Dendritic cell treated with granulocyte-macrophage colony-stimulating factor and Interleukin-4, amounts not matched to agents 40 ng/mL and 50 ng/mL, for 4 days (primary cell): ENCODE measurements at regions of chr11 and their contacts with region 1.

Region 1: GRCh38 chr11:43894546-43894945 is 13.9 kb downstream of the ALKBH3 start:
- H3K4me3 Mint-ChIP-seq: no peak overlapping the region
- H3K27ac Mint-ChIP-seq: no peak overlapping the region
- H3K4me1 Mint-ChIP-seq: no peaks in the 10 kb centered on the region
- H3K27me3 Mint-ChIP-seq: no peaks in the 10 kb centered on the region

Region 2: GRCh38 chr11:43738590-43739409 is 155.7 kb before region 1 on chr11:
- intact Hi-C with region 1: no loop called
- H3K4me3 Mint-ChIP-seq: no peak overlapping the region
- H3K27ac Mint-ChIP-seq: no peak overlapping the region
- H3K4me1 Mint-ChIP-seq: peaks cover 25% of the 10 kb centered on the region
- H3K27me3 Mint-ChIP-seq: no peaks in the 10 kb centered on the region

Region 3: GRCh38 chr11:44036811-44037657 is 142.5 kb after region 1 on chr11:
- intact Hi-C with region 1: loop called (anchors 5 kb)
- H3K4me3 Mint-ChIP-seq: no peak overlapping the region
- H3K27ac Mint-ChIP-seq: no peak overlapping the region
- H3K4me1 Mint-ChIP-seq: no peaks in the 10 kb centered on the region
- H3K27me3 Mint-ChIP-seq: peaks cover 10% of the 10 kb centered on the region